CD8-positive, alpha-beta T cell (primary cell): ENCODE measurements at regions of chr1 and their contacts with region 1.

Region 1: GRCh38 chr1:37692078-37692833 is at the start of gene CDCA8:
- DNase-seq: peak; percentile 97 to 99 (median 99)
- ATAC-seq: peak; percentile 88
- H3K4me3 ChIP-seq: peak within 1 kb of the TSS; percentile 73 to 90
- H3K4me3 Mint-ChIP-seq: peak within 1 kb of the TSS; percentile 88
- H3K27ac ChIP-seq: peak within 1 kb of the TSS; percentile 54 to 57
- H3K27ac Mint-ChIP-seq: peak within 1 kb of the TSS; percentile 90
- H3K4me1 ChIP-seq: peaks cover 28% of the 10 kb centered on the region
- H3K4me1 Mint-ChIP-seq: peaks cover 39% of the 10 kb centered on the region
- H3K27me3 ChIP-seq: no peaks in the 10 kb centered on the region
- H3K27me3 Mint-ChIP-seq: no peaks in the 10 kb centered on the region
- CTCF ChIP-seq: peak; percentile 42
- total RNA-seq, gene CDCA8: 0.25 to 0.62 TPM

Region 2: GRCh38 chr1:36463803-36464604 is 1228.3 kb before region 1 on chr1 and contains the start of gene MRPS15:
- CTCF ChIA-PET with region 1: no interaction called
- POLR2A ChIA-PET with region 1: no interaction called
- intact Hi-C with region 1: loop called in 1 of 2 experiments (anchors 1 kb)
- DNase-seq: peak; percentile 88 to 97 (median 94)
- ATAC-seq: peak; percentile 98
- H3K4me3 ChIP-seq: peak within 1 kb of the TSS; percentile 90 to 92
- H3K4me3 Mint-ChIP-seq: peak within 1 kb of the TSS; percentile 91
- H3K27ac ChIP-seq: peak within 1 kb of the TSS; percentile 82 to 90
- H3K27ac Mint-ChIP-seq: peak within 1 kb of the TSS; percentile 96
- H3K4me1 ChIP-seq: peaks cover 12% of the 10 kb centered on the region
- H3K4me1 Mint-ChIP-seq: peaks cover 29% of the 10 kb centered on the region
- H3K27me3 ChIP-seq: no peaks in the 10 kb centered on the region
- H3K27me3 Mint-ChIP-seq: no peaks in the 10 kb centered on the region
- CTCF ChIP-seq: no peak
- total RNA-seq, gene MRPS15: 37.9 to 45.4 TPM

Region 3: DNA sequence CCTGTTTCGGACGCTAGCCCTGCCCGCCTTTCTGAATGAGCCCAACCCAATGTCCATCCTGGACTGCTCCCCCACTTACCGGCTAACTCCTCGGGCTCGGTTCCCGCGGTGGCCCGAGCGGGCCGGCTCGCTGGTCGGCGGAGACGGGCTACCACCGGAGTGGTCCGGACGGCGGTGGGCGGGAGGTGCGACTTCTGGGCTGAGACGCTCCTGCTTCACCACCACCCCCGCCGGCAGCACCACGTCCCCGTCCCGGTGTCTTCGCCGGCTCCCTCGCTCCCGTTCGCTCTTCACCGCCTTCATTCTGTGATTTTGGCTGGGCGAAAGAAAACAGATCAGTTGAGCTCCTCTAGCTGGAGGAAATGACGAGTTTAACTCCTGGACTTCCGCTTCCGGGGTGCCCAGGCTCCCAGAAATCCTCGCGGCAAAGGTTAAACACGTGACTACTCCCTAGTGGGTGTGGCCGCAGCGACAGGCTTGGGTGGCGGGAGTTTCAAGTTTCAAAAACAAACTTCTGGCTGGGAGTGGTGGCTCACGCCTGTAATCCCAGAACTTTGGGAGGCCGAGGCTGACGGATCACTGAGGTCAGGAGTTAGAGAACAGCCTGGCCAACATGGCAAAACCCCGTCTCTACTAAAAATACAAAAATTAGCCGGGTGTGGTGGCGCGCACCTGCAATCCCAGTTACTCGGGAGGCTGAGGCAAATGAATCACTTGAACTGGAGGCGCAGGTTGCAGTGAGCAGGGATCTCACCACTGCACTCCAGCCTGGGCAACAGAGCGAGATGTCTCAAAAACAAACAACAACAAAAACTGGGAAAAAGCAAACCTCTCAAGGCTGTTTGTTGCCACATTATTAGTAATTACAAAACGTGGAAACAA is 138.1 kb before region 1 on chr1 and contains the start of gene SNIP1:
- CTCF ChIA-PET with region 1: no interaction called
- POLR2A ChIA-PET with region 1: no interaction called
- intact Hi-C with region 1: loop called (anchors 1 kb)
- DNase-seq: peak; percentile 84 to 96 (median 91)
- ATAC-seq: peak; percentile 95
- H3K4me3 ChIP-seq: peak within 1 kb of the TSS; percentile 88 to 97
- H3K4me3 Mint-ChIP-seq: peak within 1 kb of the TSS; percentile 100
- H3K27ac ChIP-seq: peak within 1 kb of the TSS; percentile 88 to 91
- H3K27ac Mint-ChIP-seq: peak within 1 kb of the TSS; percentile 100
- H3K4me1 ChIP-seq: peaks cover 24% of the 10 kb centered on the region
- H3K4me1 Mint-ChIP-seq: peaks cover 43% of the 10 kb centered on the region
- H3K27me3 ChIP-seq: no peaks in the 10 kb centered on the region
- H3K27me3 Mint-ChIP-seq: peaks cover 2% of the 10 kb centered on the region
- CTCF ChIP-seq: no peak
- total RNA-seq, gene SNIP1: 71.7 to 84.2 TPM

Region 4: DNA sequence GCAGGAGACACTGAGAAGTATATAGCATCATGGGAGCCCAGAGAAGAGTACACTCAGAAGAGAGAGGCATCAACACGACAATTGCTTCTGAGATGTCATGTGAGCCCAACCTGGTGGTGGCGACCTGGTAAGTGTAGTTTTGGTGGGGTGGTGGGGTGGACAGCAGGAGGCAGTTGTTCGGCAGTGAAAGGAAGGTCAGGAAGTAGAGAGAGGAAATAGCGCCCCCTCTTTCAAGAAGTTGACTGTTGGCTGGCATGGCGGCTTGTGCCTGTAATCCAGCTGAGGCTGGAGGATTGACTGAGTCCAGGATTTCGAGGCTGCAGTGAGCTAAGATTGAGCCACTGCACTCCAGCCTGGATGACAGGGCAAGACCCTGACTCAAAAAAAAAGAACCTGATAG is 70.1 kb before region 1 on chr1:
- CTCF ChIA-PET with region 1: no interaction called
- POLR2A ChIA-PET with region 1: no interaction called
- intact Hi-C with region 1: no loop called
- DNase-seq: peak in 1 of 9 experiments; percentile 10
- ATAC-seq: no peak
- H3K4me3 ChIP-seq: no peak overlapping the region
- H3K4me3 Mint-ChIP-seq: no peak overlapping the region
- H3K27ac ChIP-seq: no peak overlapping the region
- H3K27ac Mint-ChIP-seq: no peak overlapping the region
- H3K4me1 ChIP-seq: no peaks in the 10 kb centered on the region
- H3K4me1 Mint-ChIP-seq: no peaks in the 10 kb centered on the region
- H3K27me3 ChIP-seq: no peaks in the 10 kb centered on the region
- H3K27me3 Mint-ChIP-seq: peaks cover 43% of the 10 kb centered on the region
- CTCF ChIP-seq: no peak

Region 5: DNA sequence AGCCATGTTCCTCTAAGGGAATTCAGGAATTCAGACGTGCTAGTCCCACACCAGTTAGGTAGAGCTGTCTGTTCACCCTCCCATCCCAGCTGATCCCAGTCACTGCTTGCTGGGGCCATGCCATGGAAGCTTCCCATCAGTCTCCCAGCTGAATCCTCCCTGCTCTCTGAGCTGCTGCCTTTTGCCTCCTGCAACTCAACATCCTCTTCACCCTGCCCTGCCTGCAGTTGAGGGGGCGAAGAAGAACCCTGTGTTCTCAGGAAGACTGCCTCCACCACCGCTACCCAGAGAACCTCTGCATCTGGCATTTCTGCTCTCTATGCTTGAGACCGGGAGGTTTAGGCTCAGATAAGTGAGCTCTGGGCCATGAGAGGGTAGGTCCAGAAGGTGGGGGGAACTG is 16.2 kb after region 1 on chr1:
- CTCF ChIA-PET with region 1: no interaction called
- POLR2A ChIA-PET with region 1: no interaction called
- intact Hi-C with region 1: no loop called
- DNase-seq: no peak
- ATAC-seq: no peak
- H3K4me3 ChIP-seq: no peak overlapping the region
- H3K4me3 Mint-ChIP-seq: no peak overlapping the region
- H3K27ac ChIP-seq: no peak overlapping the region
- H3K27ac Mint-ChIP-seq: no peak overlapping the region
- H3K4me1 ChIP-seq: no peaks in the 10 kb centered on the region
- H3K4me1 Mint-ChIP-seq: no peaks in the 10 kb centered on the region
- H3K27me3 ChIP-seq: no peaks in the 10 kb centered on the region
- H3K27me3 Mint-ChIP-seq: no peaks in the 10 kb centered on the region
- CTCF ChIP-seq: no peak

Region 6: GRCh38 chr1:37807555-37808368 is 115.5 kb after region 1 on chr1 and contains the starts of genes C1orf122 and YRDC:
- CTCF ChIA-PET with region 1: no interaction called
- POLR2A ChIA-PET with region 1: interaction called, 5 read pairs
- intact Hi-C with region 1: loop called in 1 of 2 experiments (anchors 1 kb)
- DNase-seq: peak; percentile 82 to 95 (median 94)
- ATAC-seq: peak; percentile 88
- H3K4me3 ChIP-seq: peak within 1 kb of the TSS; percentile 69 to 92
- H3K4me3 Mint-ChIP-seq: peak within 1 kb of the TSS; percentile 97
- H3K27ac ChIP-seq: peak within 1 kb of the TSS; percentile 86 to 89
- H3K27ac Mint-ChIP-seq: peak within 1 kb of the TSS; percentile 98
- H3K4me1 ChIP-seq: peaks cover 30% of the 10 kb centered on the region
- H3K4me1 Mint-ChIP-seq: peaks cover 40% of the 10 kb centered on the region
- H3K27me3 ChIP-seq: no peaks in the 10 kb centered on the region
- H3K27me3 Mint-ChIP-seq: no peaks in the 10 kb centered on the region
- CTCF ChIP-seq: no peak
- total RNA-seq, gene C1orf122: 13.8 to 14.8 TPM
- total RNA-seq, gene YRDC: 31.6 to 32.8 TPM

Region 7: DNA sequence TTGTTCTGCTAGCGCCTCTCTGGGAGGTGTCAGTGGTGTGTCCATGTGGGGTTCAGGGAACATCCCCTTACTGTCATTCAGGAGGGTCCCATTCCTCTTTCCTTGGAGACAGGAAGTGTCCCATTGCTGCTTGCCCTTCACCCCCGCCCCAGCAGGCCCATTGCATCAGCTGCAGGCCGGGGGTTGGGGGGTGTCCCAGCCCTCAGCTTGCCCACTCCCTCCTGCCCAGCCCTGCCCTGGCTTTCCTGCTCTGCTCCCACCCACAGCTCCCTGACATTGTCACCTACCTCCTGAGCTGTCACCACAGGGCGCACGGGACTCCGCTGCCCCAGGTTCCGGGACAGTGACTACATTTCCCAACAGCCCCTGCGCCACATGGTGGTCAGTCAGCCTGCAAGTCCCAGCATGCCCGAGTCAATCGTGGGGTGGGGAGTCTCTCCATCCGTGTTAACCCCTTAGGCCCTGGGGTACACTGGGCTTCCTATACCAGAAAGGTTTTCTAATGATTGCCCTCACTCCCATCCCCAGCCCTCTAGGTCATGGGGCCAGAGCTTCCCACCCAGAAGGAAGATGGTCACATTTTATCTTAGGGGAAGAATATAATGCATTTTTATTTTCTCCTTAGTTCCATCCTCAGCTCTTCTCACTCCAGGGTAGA is 254.6 kb after region 1 on chr1 and contains the start of gene INPP5B:
- CTCF ChIA-PET with region 1: no interaction called
- POLR2A ChIA-PET with region 1: no interaction called
- intact Hi-C with region 1: loop called in 1 of 2 experiments (anchors 1 kb)
- DNase-seq: peak; percentile 30 to 82 (median 71)
- ATAC-seq: peak; percentile 97
- H3K4me3 ChIP-seq: peak within 1 kb of the TSS; percentile 60 to 64
- H3K4me3 Mint-ChIP-seq: peak within 1 kb of the TSS; percentile 88
- H3K27ac ChIP-seq: peak within 1 kb of the TSS; percentile 14 to 56
- H3K27ac Mint-ChIP-seq: peak within 1 kb of the TSS; percentile 92
- H3K4me1 ChIP-seq: peaks cover 17% of the 10 kb centered on the region
- H3K4me1 Mint-ChIP-seq: peaks cover 18% of the 10 kb centered on the region
- H3K27me3 ChIP-seq: no peaks in the 10 kb centered on the region
- H3K27me3 Mint-ChIP-seq: no peaks in the 10 kb centered on the region
- CTCF ChIP-seq: no peak
- total RNA-seq, gene INPP5B: 11.2 to 12.7 TPM

Region 8: GRCh38 chr1:38102636-38103035 is 410.4 kb after region 1 on chr1:
- CTCF ChIA-PET with region 1: no interaction called
- POLR2A ChIA-PET with region 1: no interaction called
- intact Hi-C with region 1: no loop called
- DNase-seq: no peak
- ATAC-seq: no peak
- H3K4me3 ChIP-seq: no peak overlapping the region
- H3K4me3 Mint-ChIP-seq: no peak overlapping the region
- H3K27ac ChIP-seq: no peak overlapping the region
- H3K27ac Mint-ChIP-seq: no peak overlapping the region
- H3K4me1 ChIP-seq: no peaks in the 10 kb centered on the region
- H3K4me1 Mint-ChIP-seq: no peaks in the 10 kb centered on the region
- H3K27me3 ChIP-seq: no peaks in the 10 kb centered on the region
- H3K27me3 Mint-ChIP-seq: peaks cover 12% of the 10 kb centered on the region
- CTCF ChIP-seq: no peak

Region 9: DNA sequence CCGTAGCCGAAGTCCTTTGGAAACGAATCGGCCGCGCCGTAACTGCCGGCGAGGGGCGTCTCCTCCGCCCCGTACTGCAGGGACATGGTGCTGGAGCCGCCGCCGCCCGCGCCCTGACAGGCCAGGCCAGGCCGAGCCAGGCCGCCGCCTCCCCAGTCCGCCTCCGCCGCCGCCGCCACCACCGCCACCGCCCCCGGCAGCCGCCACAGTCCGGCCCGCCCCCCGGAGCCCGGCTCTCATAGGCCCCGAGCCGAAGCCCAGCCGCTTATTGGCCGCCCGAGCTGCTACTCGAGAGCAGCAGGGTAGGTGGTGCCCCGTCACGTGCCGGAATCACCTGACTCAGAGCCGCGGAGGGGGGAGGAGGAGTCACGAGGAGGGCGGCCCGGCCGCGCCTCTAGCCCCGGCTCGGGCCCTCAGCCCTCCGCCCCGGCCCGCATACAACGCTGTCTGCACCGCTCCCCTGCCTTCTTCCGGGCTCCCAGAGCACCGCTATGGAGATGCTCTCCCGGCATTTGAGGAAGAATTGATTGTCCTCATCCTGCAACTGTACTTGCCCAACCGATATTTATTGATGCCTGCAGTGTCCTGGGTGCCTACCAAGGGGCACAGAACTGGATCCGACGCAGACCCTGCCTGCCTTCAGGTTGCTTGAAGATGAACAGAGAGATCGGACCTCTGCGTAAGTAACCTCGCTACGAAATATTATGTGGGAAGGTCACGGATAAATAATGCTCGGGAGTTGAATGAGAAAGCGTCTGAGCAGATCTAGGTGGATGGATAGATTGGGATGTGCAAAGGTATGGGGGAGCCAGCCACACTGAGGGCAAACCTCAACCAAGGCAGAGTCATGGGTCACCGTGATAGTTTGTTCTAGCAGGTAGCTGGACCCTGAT is 1167.6 kb after region 1 on chr1 and contains the start of gene RRAGC:
- CTCF ChIA-PET with region 1: no interaction called
- POLR2A ChIA-PET with region 1: no interaction called
- intact Hi-C with region 1: loop called (anchors 1 to 5 kb)
- DNase-seq: peak; percentile 95 to 99 (median 98)
- ATAC-seq: peak; percentile 96
- H3K4me3 ChIP-seq: peak within 1 kb of the TSS; percentile 79 to 85
- H3K4me3 Mint-ChIP-seq: peak within 1 kb of the TSS; percentile 90
- H3K27ac ChIP-seq: peak within 1 kb of the TSS; percentile 48 to 68
- H3K27ac Mint-ChIP-seq: peak within 1 kb of the TSS; percentile 86
- H3K4me1 ChIP-seq: peaks cover 22% of the 10 kb centered on the region
- H3K4me1 Mint-ChIP-seq: peaks cover 67% of the 10 kb centered on the region
- H3K27me3 ChIP-seq: no peaks in the 10 kb centered on the region
- H3K27me3 Mint-ChIP-seq: no peaks in the 10 kb centered on the region
- CTCF ChIP-seq: no peak
- total RNA-seq, gene RRAGC: 13.6 to 14.7 TPM